Caco-2 (cell line): ENCODE measurements at regions of chr15 and their contacts with region 1.

Region 1: DNA sequence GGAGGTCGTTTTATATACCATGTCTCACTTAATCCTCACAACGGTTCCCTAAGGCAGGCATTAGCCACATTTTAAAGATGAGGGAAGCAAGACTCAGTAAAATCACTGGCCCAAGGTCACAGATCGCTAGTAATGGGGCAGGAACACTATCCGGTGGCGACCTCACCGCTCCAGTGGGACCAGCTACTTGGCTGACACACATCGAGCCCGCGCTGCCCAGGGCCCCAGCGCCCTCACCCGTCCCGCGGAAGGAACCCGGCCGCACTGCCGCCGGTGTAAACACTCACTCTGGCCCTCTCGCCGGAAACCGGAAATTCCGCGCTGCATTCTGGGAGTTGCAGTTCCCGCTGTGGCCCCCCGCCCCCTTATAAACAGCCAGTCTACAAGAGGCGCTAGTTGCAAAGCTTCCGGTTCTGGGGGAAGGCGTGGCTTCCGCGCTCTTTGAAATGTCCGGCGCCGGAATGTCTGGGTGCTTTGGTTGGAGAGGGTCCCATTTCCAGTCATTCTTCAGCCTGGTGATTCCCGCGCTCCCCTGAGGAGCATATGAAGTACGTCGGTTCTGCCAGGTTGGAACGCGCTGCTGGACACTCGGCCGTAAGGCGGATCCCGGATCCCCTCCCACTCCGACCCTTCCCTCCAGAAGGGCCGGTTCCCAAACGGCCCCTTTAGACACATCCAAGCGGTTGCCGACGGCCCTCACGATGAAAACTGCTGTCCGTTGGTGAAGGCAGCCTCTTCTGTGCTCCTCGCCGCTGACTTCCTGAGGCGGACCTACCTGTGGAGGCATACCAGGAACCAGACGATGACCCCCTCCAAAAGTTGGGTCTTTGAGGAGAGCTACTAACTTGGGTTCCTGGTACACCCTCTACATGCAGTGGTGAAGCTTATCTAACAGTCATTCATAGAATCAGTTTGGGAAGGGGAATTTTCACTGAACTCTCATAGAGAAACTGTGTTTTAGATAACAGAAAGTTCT is at the start of gene UBL7:
- DNase-seq: peak; percentile 97
- H3K4me3 ChIP-seq: peak within 1 kb of the TSS; percentile 51
- H3K4me3 Mint-ChIP-seq: peak within 1 kb of the TSS; percentile 92
- H3K27ac Mint-ChIP-seq: peak within 1 kb of the TSS; percentile 74
- H3K4me1 ChIP-seq: peaks cover 13% of the 10 kb centered on the region; the same call in 1 of the 2 replicates
- H3K4me1 Mint-ChIP-seq: peaks cover 28% of the 10 kb centered on the region
- H3K27me3 ChIP-seq: no peaks in the 10 kb centered on the region
- H3K27me3 Mint-ChIP-seq: no peaks in the 10 kb centered on the region
- CTCF ChIP-seq: peak in 1 of 2 experiments; percentile 51
- total RNA-seq, gene UBL7: 31.4 and 34.4 TPM in 2 replicates

Region 2: GRCh38 chr15:74382004-74382816 is 78.9 kb before region 1 on chr15:
- CTCF ChIA-PET with region 1: interaction called, 14 read pairs
- POLR2A ChIA-PET with region 1: interaction called, 3 read pairs
- intact Hi-C with region 1: no loop called
- DNase-seq: peak; percentile 83 to 91
- H3K4me3 ChIP-seq: no peak overlapping the region
- H3K4me3 Mint-ChIP-seq: no peak overlapping the region
- H3K27ac Mint-ChIP-seq: no peak overlapping the region
- H3K4me1 ChIP-seq: peaks cover 45% of the 10 kb centered on the region
- H3K4me1 Mint-ChIP-seq: peaks cover 6% of the 10 kb centered on the region
- H3K27me3 ChIP-seq: no peaks in the 10 kb centered on the region
- H3K27me3 Mint-ChIP-seq: no peaks in the 10 kb centered on the region
- CTCF ChIP-seq: peak; percentile 93 to 94

Region 3: GRCh38 chr15:74389241-74390048 is 71.7 kb before region 1 on chr15:
- CTCF ChIA-PET with region 1: interaction called, 14 read pairs
- POLR2A ChIA-PET with region 1: no interaction called
- intact Hi-C with region 1: loop called (anchors 2 kb)
- DNase-seq: peak; percentile 82 to 92
- H3K4me3 ChIP-seq: no peak overlapping the region
- H3K4me3 Mint-ChIP-seq: peak overlapping the region; percentile 52
- H3K27ac Mint-ChIP-seq: peak overlapping the region; percentile 88
- H3K4me1 ChIP-seq: peaks cover 73% of the 10 kb centered on the region
- H3K4me1 Mint-ChIP-seq: peaks cover 46% of the 10 kb centered on the region
- H3K27me3 ChIP-seq: no peaks in the 10 kb centered on the region
- H3K27me3 Mint-ChIP-seq: no peaks in the 10 kb centered on the region
- CTCF ChIP-seq: no peak

Region 4: DNA sequence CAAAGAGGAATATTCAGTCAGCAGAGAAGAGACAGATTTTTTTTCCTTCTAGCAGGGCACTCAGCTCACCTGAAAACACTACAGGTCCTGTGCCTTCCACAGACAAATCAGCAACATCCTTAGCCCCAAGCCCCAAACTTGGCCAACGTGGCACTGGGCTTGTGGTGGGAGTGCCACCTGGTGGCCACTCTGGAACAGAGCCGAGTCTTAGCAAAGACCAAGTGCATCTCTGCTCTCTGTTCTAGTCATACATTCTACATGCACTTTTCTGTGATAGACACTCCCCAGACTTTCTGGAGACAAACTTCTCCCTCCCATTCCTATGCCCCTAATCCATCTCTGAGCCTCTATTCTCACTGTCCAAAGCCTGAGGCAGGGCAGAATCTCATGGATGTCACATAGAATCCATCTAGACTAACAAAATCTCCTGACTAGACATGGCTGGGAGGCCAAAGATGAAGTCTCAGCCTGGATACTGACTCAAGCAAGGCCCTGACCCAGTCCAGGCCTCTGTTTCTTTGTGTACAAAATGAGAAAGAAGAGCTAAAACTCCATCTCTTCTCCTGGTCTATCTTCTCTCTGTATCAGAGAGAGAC is 22.3 kb before region 1 on chr15:
- CTCF ChIA-PET with region 1: interaction called, 13 read pairs
- POLR2A ChIA-PET with region 1: interaction called, 14 read pairs
- intact Hi-C with region 1: loop called (anchors 1 kb)
- DNase-seq: peak; percentile 77 to 81
- H3K4me3 ChIP-seq: no peak overlapping the region
- H3K4me3 Mint-ChIP-seq: no peak overlapping the region
- H3K27ac Mint-ChIP-seq: peak overlapping the region; percentile 90
- H3K4me1 ChIP-seq: peaks cover 45% of the 10 kb centered on the region
- H3K4me1 Mint-ChIP-seq: peaks cover 45% of the 10 kb centered on the region
- H3K27me3 ChIP-seq: no peaks in the 10 kb centered on the region
- H3K27me3 Mint-ChIP-seq: no peaks in the 10 kb centered on the region
- CTCF ChIP-seq: peak; percentile 81 to 92

Region 5: GRCh38 chr15:74482661-74483060 is 21.5 kb after region 1 on chr15:
- CTCF ChIA-PET with region 1: interaction called, 11 read pairs
- POLR2A ChIA-PET with region 1: interaction called, 3 read pairs
- intact Hi-C with region 1: no loop called
- DNase-seq: peak in 1 of 2 experiments; percentile 24
- H3K4me3 ChIP-seq: no peak overlapping the region
- H3K4me3 Mint-ChIP-seq: no peak overlapping the region
- H3K27ac Mint-ChIP-seq: no peak overlapping the region
- H3K4me1 ChIP-seq: no peaks in the 10 kb centered on the region
- H3K4me1 Mint-ChIP-seq: no peaks in the 10 kb centered on the region
- H3K27me3 ChIP-seq: no peaks in the 10 kb centered on the region
- H3K27me3 Mint-ChIP-seq: no peaks in the 10 kb centered on the region
- CTCF ChIP-seq: peak; percentile 11 to 40